Naive thymus-derived CD4-positive, alpha-beta T cell (primary cell): ENCODE measurements at regions of chr6 and their contacts with region 1.

Region 1: GRCh38 chr6:88963139-88964090 is at the start of gene RNGTT:
- DNase-seq: peak; percentile 89 to 98 (median 95)
- ATAC-seq: peak; percentile 100
- H3K4me3 ChIP-seq: peak within 1 kb of the TSS; percentile 82
- H3K4me3 Mint-ChIP-seq: peak within 1 kb of the TSS; percentile 91 to 99 (median 98)
- H3K27ac ChIP-seq: peak within 1 kb of the TSS; percentile 82
- H3K27ac Mint-ChIP-seq: peak within 1 kb of the TSS; percentile 85 to 97 (median 94)
- H3K4me1 ChIP-seq: peaks cover 9 to 18% of the 10 kb centered on the region in 2 donors
- H3K4me1 Mint-ChIP-seq: peaks cover 25 to 57% (median 52%) of the 10 kb centered on the region in 7 donors
- H3K27me3 ChIP-seq: no peaks in the 10 kb centered on the region
- H3K27me3 Mint-ChIP-seq: peaks cover 0 to 2% (median 0%) of the 10 kb centered on the region in 5 donors
- total RNA-seq, gene RNGTT: 15.4 to 26.5 (median 20.8) TPM

Region 2: DNA sequence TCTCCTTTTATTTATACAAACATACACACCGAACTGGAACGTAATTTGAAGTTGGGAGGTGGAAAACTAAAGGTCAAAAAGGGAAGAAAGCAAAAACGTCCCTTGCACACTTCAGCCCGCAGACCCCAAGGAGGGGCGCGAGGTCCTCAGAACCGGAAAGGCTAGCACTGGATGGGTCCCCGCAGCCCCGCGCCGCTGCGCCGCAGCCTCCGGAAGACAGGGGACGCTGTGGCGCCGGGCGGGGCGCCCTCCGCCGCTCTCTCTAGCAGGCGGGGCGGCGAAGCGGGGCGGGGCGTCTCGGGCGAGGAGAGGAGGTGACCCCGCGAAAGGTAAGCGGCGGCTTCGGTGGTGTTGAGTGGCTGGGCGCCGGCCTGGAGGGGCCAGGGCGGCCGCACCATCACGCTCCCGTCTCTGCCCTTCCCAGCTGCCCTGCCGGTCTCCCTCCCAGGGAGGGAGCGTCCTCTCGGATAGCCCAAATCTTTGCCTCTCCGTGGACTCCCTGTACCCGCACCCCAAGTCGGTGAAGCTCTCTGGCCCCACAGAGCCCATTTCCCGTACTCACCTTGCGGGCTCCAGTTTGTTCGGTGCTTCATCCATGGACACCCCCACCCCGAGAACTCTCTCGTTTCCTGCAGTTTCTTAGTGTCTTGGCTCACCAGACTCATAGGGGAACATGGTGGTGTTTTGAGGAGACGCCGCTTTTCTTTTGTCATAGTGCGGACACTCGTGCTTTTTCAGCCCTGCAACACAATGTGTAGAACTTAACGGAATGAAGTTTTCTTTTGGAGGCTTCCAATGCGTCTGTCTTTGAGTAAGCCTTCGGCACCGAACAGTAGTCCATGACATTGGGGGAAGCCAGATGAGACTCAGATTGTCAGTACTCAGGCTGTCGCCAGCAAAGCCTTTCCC is 1640.9 kb before region 1 on chr6 and contains the start of gene SMIM8:
- CTCF ChIA-PET with region 1: no interaction called
- POLR2A ChIA-PET with region 1: no interaction called
- intact Hi-C with region 1: loop called in 1 of 2 experiments (anchors 2 kb)
- DNase-seq: peak; percentile 67 to 94 (median 81)
- ATAC-seq: peak; percentile 100
- H3K4me3 ChIP-seq: peak within 1 kb of the TSS; percentile 82
- H3K4me3 Mint-ChIP-seq: peak within 1 kb of the TSS; percentile 94 to 99 (median 98)
- H3K27ac ChIP-seq: peak within 1 kb of the TSS; percentile 80
- H3K27ac Mint-ChIP-seq: peak within 1 kb of the TSS; percentile 77 to 95 (median 93)
- H3K4me1 ChIP-seq: no peaks in the 10 kb centered on the region
- H3K4me1 Mint-ChIP-seq: peaks cover 14 to 32% (median 26%) of the 10 kb centered on the region in 7 donors
- H3K27me3 ChIP-seq: no peaks in the 10 kb centered on the region
- H3K27me3 Mint-ChIP-seq: peaks cover 0 to 6% (median 5%) of the 10 kb centered on the region in 5 donors
- total RNA-seq, gene SMIM8: 7.3 to 15.7 (median 10.5) TPM

Region 3: DNA sequence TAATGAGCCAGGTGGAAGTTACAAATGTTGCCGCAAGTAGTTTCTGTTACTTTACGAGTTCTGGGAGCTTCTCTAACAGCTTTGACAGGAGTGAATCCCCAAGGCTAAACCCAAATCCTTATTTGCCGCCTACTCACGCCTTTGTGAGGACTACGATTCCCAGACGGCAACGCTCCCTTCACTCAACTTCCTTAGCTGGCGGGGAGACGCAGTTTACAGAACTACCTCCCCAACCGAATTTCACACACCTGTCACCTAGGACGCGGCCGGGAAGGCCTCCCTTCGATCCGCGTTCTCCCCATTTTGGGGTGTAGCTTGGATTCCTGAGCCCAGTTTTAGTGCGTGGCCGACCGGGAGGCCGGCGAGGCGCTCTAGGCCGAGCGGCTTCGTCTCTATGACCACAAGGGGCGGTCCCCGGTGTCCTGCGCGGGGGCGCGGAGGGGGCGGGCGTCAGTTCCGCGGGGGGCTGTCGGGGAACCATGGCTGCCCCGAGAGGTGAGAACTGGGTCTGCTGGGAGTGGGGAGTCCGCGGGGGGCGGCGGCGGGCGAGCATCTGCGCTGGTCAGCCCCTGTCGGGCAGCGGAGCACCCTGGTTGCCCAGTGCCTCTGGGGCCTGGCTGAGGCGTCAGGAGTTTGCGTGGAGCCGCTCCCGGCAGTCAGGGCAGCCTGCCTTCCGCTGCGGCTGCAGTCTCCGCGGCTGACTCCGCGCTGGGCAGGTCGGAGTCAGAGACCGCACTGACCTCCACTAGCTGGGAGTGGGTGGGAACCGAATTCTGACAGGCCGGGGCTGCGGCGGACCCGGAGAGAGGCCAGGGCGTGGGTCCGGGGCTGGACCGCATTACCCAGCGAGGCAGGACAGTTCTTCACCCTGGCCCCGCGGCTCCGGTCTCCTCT is 1490.6 kb before region 1 on chr6 and contains the start of gene SLC35A1:
- CTCF ChIA-PET with region 1: no interaction called
- POLR2A ChIA-PET with region 1: no interaction called
- intact Hi-C with region 1: loop called in 1 of 2 experiments (anchors 2 kb)
- DNase-seq: peak; percentile 78 to 92 (median 87)
- ATAC-seq: peak; percentile 97
- H3K4me3 ChIP-seq: peak within 1 kb of the TSS; percentile 81
- H3K4me3 Mint-ChIP-seq: peak within 1 kb of the TSS; percentile 88 to 99 (median 98)
- H3K27ac ChIP-seq: peak within 1 kb of the TSS; percentile 93
- H3K27ac Mint-ChIP-seq: peak within 1 kb of the TSS; percentile 95 to 100 (median 99)
- H3K4me1 ChIP-seq: peaks cover 9 to 11% of the 10 kb centered on the region in 2 donors
- H3K4me1 Mint-ChIP-seq: peaks cover 14 to 31% (median 20%) of the 10 kb centered on the region in 7 donors
- H3K27me3 ChIP-seq: no peaks in the 10 kb centered on the region
- H3K27me3 Mint-ChIP-seq: peaks cover 2 to 14% (median 9%) of the 10 kb centered on the region in 5 donors
- total RNA-seq, gene SLC35A1: 10.4 to 23.4 (median 15.6) TPM

Region 4: GRCh38 chr6:87589693-87590549 is 1373.5 kb before region 1 on chr6 and contains the starts of genes ORC3 and RARS2:
- CTCF ChIA-PET with region 1: no interaction called
- POLR2A ChIA-PET with region 1: no interaction called
- intact Hi-C with region 1: loop called in 1 of 2 experiments (anchors 2 kb)
- DNase-seq: peak; percentile 86 to 97 (median 92)
- ATAC-seq: peak; percentile 100
- H3K4me3 ChIP-seq: peak within 1 kb of the TSS; percentile 89
- H3K4me3 Mint-ChIP-seq: peak within 1 kb of the TSS; percentile 87 to 100 (median 96)
- H3K27ac ChIP-seq: peak within 1 kb of the TSS; percentile 92
- H3K27ac Mint-ChIP-seq: peak within 1 kb of the TSS; percentile 87 to 97 (median 95)
- H3K4me1 ChIP-seq: peaks cover 22 to 32% of the 10 kb centered on the region in 2 donors
- H3K4me1 Mint-ChIP-seq: peaks cover 49 to 81% (median 75%) of the 10 kb centered on the region in 7 donors
- H3K27me3 ChIP-seq: no peaks in the 10 kb centered on the region
- H3K27me3 Mint-ChIP-seq: no peaks in the 10 kb centered on the region
- total RNA-seq, gene ORC3: 17.7 to 29.8 (median 27.6) TPM
- total RNA-seq, gene RARS2: 21.0 to 40.0 (median 24.2) TPM

Region 5: GRCh38 chr6:89145787-89146646 is 182.6 kb after region 1 on chr6 and contains the start of gene PM20D2:
- CTCF ChIA-PET with region 1: no interaction called
- POLR2A ChIA-PET with region 1: no interaction called
- intact Hi-C with region 1: loop called in 1 of 2 experiments (anchors 1 kb)
- DNase-seq: peak; percentile 45 to 78 (median 59)
- ATAC-seq: peak; percentile 84
- H3K4me3 ChIP-seq: peak within 1 kb of the TSS; percentile 58
- H3K4me3 Mint-ChIP-seq: peak within 1 kb of the TSS; percentile 86 to 99 (median 94)
- H3K27ac ChIP-seq: peak within 1 kb of the TSS; percentile 73
- H3K27ac Mint-ChIP-seq: peak within 1 kb of the TSS; percentile 84 to 98 (median 95)
- H3K4me1 ChIP-seq: peaks cover 5 to 10% of the 10 kb centered on the region in 2 donors
- H3K4me1 Mint-ChIP-seq: peaks cover 16 to 39% (median 23%) of the 10 kb centered on the region in 7 donors
- H3K27me3 ChIP-seq: no peaks in the 10 kb centered on the region
- H3K27me3 Mint-ChIP-seq: peaks cover 0 to 14% (median 0%) of the 10 kb centered on the region in 5 donors
- total RNA-seq, gene PM20D2: 4.6 to 12.7 (median 9.5) TPM

Region 6: DNA sequence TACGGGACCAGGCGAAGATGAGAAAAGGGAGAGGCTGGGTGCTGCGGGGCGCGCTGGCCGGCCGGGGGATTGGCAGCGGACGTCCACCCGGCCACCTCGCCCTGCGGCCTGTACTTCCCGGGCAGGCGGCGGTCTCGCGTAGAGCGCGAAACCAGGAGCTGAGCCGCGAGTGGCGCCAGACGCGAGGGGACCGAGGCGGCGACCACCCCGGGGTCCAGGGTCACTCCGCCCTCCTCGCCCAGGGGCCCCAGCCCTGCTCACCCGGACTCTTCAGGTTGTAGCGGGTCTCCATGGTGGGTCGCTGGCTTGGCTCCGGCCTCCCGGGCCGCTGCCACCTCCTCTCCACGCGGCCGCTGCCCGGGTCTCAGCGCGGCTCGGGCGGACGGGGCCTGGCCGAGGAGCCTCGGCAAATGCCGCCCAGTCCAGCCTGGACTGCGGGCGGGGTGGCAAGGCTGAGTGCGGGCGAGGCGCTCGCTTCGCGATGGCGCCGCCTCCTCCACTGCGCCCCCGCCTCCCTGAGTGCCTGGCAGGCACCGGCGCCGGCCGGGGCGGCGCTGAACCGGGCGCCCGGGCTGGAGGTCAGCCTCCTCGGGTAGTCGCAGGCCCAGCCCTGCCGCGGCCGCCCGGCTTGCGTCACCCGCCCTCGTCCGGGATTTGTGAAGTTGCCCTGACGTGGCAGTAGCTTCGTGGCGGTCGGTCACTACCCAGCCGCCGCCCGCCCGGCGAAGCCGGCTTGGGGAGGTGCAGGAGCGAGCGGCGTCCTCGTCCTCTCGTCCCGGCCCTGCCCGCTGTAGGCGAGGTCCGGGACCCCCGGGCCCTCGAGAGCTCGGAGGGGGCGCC is 389.1 kb after region 1 on chr6 and contains the start of gene UBE2J1:
- CTCF ChIA-PET with region 1: no interaction called
- POLR2A ChIA-PET with region 1: interaction called, 4 read pairs
- intact Hi-C with region 1: loop called (anchors 1 to 2 kb)
- DNase-seq: peak; percentile 34 to 87 (median 61)
- ATAC-seq: peak; percentile 89
- H3K4me3 ChIP-seq: peak within 1 kb of the TSS; percentile 67
- H3K4me3 Mint-ChIP-seq: peak within 1 kb of the TSS; percentile 96 to 100 (median 98)
- H3K27ac ChIP-seq: peak within 1 kb of the TSS; percentile 88
- H3K27ac Mint-ChIP-seq: peak within 1 kb of the TSS; percentile 95 to 98 (median 97)
- H3K4me1 ChIP-seq: peaks cover 27 to 30% of the 10 kb centered on the region in 2 donors
- H3K4me1 Mint-ChIP-seq: peaks cover 44 to 81% (median 72%) of the 10 kb centered on the region in 7 donors
- H3K27me3 ChIP-seq: no peaks in the 10 kb centered on the region
- H3K27me3 Mint-ChIP-seq: no peaks in the 10 kb centered on the region
- total RNA-seq, gene UBE2J1: 18.8 to 47.7 (median 27.7) TPM

Region 7: GRCh38 chr6:90586836-90587638 is 1623.6 kb after region 1 on chr6 and contains the start of gene MAP3K7:
- CTCF ChIA-PET with region 1: no interaction called
- POLR2A ChIA-PET with region 1: interaction called, 4 read pairs
- intact Hi-C with region 1: loop called (anchors 1 to 5 kb)
- DNase-seq: peak; percentile 83 to 96 (median 93)
- ATAC-seq: peak; percentile 90
- H3K4me3 ChIP-seq: peak within 1 kb of the TSS; percentile 88
- H3K4me3 Mint-ChIP-seq: peak within 1 kb of the TSS; percentile 92 to 99 (median 96)
- H3K27ac ChIP-seq: peak within 1 kb of the TSS; percentile 93
- H3K27ac Mint-ChIP-seq: peak within 1 kb of the TSS; percentile 93 to 100 (median 99)
- H3K4me1 ChIP-seq: peaks cover 17 to 22% of the 10 kb centered on the region in 2 donors
- H3K4me1 Mint-ChIP-seq: peaks cover 24 to 49% (median 45%) of the 10 kb centered on the region in 7 donors
- H3K27me3 ChIP-seq: no peaks in the 10 kb centered on the region
- H3K27me3 Mint-ChIP-seq: peaks cover 5 to 36% (median 11%) of the 10 kb centered on the region in 5 donors
- total RNA-seq, gene MAP3K7: 16.1 to 38.5 (median 29.9) TPM

Region 8: GRCh38 chr6:90764001-90764400 is 1800.6 kb after region 1 on chr6:
- CTCF ChIA-PET with region 1: no interaction called
- POLR2A ChIA-PET with region 1: no interaction called
- intact Hi-C with region 1: no loop called
- DNase-seq: no peak
- ATAC-seq: no peak
- H3K4me3 ChIP-seq: no peak overlapping the region
- H3K4me3 Mint-ChIP-seq: no peak overlapping the region
- H3K27ac ChIP-seq: no peak overlapping the region
- H3K27ac Mint-ChIP-seq: no peak overlapping the region
- H3K4me1 ChIP-seq: no peaks in the 10 kb centered on the region
- H3K4me1 Mint-ChIP-seq: no peaks in the 10 kb centered on the region
- H3K27me3 ChIP-seq: no peaks in the 10 kb centered on the region
- H3K27me3 Mint-ChIP-seq: peaks cover 3 to 35% (median 30%) of the 10 kb centered on the region in 5 donors